ENCODE measurements at regions of chr10 and their contacts with region 1.

Region 1: DNA sequence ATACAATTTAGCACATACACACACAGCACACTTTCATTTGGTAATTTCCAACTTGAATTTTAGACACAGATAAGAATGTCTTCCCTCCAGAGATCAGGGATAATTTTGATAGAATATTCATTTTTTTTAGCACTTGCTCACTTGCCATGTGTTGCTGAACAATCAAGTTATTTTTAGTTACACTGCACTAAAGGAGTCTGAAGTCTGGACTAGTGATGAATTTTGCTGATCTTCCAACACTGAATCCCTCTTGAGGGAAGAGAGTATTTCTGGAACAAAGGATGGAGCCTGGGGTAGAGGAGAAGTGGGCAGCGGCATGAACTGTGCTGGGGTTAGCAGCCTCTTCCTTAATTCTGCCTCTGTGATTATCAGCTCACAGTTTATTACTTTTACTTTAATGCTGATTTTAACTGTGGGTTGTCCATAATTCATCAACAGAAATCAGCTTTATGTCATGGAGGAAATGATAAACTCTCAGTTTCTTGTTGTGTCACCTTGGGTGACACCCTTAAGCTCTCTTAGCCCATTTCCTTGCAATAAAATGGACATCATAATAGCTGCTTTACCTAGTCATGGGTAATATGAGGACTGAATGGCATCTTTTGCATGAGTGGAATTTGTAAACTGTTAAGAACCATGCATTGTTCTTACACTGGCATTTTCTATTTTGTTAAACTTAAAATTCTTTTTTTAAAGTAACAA is 32.1 kb downstream of the SGPL1 start:
- DNase-seq: no peak
- H3K4me3 Mint-ChIP-seq: no peak overlapping the region
- H3K27ac Mint-ChIP-seq: no peak overlapping the region
- H3K4me1 Mint-ChIP-seq: peaks cover 7% of the 10 kb centered on the region
- H3K27me3 Mint-ChIP-seq: no peaks in the 10 kb centered on the region

Region 2: DNA sequence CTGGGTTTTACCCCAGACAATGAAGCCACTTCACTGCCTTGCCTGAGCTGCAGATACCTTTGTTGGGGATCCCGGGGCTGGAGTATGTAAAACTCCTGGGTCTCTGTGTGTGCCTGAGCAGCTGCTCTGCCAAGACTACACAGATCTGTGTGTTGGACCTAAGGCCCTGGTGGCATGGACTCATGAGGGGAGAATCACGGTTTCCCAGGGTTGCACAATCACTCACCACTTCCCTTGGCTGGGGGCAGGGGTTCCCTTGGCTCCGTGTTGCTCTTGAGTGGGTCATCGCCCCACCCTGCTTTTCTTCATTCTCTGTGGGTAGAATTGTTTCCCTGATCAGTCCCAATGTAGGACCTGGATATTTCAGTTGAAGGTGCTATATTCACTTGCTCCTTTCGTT is 48.7 kb before region 1 on chr10:
- intact Hi-C with region 1: no loop called
- DNase-seq: no peak
- H3K4me3 Mint-ChIP-seq: no peak overlapping the region
- H3K27ac Mint-ChIP-seq: no peak overlapping the region
- H3K4me1 Mint-ChIP-seq: no peaks in the 10 kb centered on the region
- H3K27me3 Mint-ChIP-seq: peaks cover 28% of the 10 kb centered on the region

Region 3: DNA sequence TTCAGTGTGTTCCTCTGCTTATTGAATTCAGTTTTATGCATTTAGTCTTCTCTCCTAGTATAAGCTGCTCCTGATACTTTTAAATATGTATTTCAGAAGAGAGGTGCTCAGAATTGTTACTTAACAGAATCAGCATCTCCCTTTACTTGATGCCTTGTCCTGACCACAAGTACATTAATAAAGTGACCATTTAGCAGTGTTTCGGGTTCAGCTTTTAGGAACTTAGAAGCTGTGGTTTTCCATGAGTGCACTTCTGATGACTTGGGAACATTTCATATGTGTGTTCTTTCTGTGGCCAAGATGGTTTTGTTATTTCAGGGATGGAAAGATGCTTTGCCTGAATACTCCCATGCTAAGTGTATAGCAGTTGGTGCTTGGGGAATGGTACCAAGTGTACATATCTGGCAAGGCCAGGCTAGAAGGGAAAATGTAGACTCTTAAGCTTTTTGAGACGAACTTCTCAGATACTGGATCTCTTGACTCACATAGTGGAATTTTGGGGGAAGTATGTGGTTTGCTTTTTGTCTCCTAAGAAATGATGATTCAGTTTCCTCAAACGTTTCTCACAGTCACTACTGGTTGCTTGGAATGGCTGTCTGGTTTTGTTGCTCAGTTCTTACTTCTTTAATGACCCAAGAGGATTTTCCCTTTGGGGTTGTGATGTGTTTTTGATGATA is 14.8 kb before region 1 on chr10:
- intact Hi-C with region 1: loop called (anchors 1 kb)
- DNase-seq: no peak
- H3K4me3 Mint-ChIP-seq: no peak overlapping the region
- H3K27ac Mint-ChIP-seq: peak overlapping the region; percentile 71
- H3K4me1 Mint-ChIP-seq: peaks cover 33% of the 10 kb centered on the region
- H3K27me3 Mint-ChIP-seq: no peaks in the 10 kb centered on the region